Calu3 (cell line): ENCODE measurements at regions of chr12 and their contacts with region 1.

Region 1: GRCh38 chr12:40946612-40947194 is 241.4 kb upstream of the PDZRN4 start:
- DNase-seq: no peak
- H3K4me3 Mint-ChIP-seq: no peak overlapping the region
- H3K27ac Mint-ChIP-seq: no peak overlapping the region
- H3K4me1 Mint-ChIP-seq: no peaks in the 10 kb centered on the region
- H3K27me3 Mint-ChIP-seq: no peaks in the 10 kb centered on the region
- CTCF ChIP-seq: peak; percentile 17

Region 2: DNA sequence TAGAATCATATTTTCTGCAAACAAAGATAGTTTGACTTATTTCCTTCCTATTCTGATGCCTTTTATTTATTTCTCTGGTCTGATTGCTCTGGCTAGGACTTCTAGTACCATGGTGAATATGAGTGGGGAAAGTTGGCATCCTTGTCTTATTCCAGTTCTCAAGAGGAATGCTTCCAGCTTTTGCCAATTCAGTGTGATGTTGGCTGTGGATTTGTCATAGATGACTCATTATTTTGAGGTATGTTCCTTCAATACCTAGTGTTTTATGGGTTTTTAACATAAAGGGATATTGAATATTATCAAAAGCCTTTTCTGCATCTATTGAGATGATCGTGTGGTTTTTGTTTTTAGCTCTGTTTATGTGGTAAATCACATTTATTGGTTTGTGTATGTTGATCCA is 393.8 kb before region 1 on chr12:
- CTCF ChIA-PET with region 1: no interaction called
- intact Hi-C with region 1: no loop called
- DNase-seq: no peak
- H3K4me3 Mint-ChIP-seq: no peak overlapping the region
- H3K27ac Mint-ChIP-seq: no peak overlapping the region
- H3K4me1 Mint-ChIP-seq: no peaks in the 10 kb centered on the region
- H3K27me3 Mint-ChIP-seq: no peaks in the 10 kb centered on the region
- CTCF ChIP-seq: no peak

Region 3: DNA sequence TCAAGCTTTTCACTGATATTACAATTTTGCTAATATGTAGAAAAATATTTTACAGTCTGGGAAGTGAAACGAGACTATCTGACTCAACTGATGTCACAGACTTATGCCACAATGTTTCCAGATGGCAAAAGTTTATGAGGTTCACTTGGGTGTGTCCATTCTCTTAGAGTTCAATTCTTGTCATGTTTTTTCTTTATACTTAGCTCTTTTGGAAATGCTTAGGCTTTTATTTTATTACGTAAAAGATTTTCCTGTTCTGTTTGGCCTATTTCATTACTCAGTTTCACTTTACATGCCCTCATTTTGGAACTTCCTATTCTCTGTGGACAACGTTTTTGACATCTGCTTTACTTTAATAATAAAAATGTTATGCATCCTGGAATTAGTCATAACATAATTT is 239.3 kb after region 1 on chr12:
- CTCF ChIA-PET with region 1: no interaction called
- intact Hi-C with region 1: no loop called
- DNase-seq: no peak
- H3K4me3 Mint-ChIP-seq: no peak overlapping the region
- H3K27ac Mint-ChIP-seq: no peak overlapping the region
- H3K4me1 Mint-ChIP-seq: peaks cover 12% of the 10 kb centered on the region
- H3K27me3 Mint-ChIP-seq: peaks cover 15% of the 10 kb centered on the region
- CTCF ChIP-seq: no peak

Region 4: DNA sequence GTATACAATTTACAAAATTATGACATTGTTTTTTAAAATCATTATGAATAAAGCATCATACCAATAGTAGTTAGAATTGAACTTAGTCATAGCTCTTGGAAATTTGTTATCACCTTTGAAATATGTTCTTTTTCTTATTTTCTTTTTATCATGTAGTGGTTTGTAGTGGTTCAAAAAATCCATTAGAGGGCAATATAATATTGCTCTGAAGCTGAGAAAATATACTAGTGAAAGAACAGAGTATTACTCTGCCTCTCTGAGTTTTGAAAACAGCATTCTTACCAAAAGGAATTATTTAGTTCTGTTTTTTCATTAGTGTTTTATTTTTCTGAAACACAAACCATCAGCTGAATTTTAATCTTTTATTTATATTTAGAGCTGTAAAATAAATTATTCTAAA is 317.6 kb after region 1 on chr12:
- CTCF ChIA-PET with region 1: no interaction called
- intact Hi-C with region 1: loop called (anchors 5 kb)
- DNase-seq: no peak
- H3K4me3 Mint-ChIP-seq: no peak overlapping the region
- H3K27ac Mint-ChIP-seq: no peak overlapping the region
- H3K4me1 Mint-ChIP-seq: no peaks in the 10 kb centered on the region
- H3K27me3 Mint-ChIP-seq: no peaks in the 10 kb centered on the region
- CTCF ChIP-seq: no peak

Region 5: GRCh38 chr12:42023733-42024494 is 1077.2 kb after region 1 on chr12:
- CTCF ChIA-PET with region 1: interaction called, 3 read pairs
- intact Hi-C with region 1: loop called (anchors 2 kb)
- DNase-seq: peak; percentile 68
- H3K4me3 Mint-ChIP-seq: peak overlapping the region; percentile 64
- H3K27ac Mint-ChIP-seq: peak overlapping the region; percentile 31
- H3K4me1 Mint-ChIP-seq: no peaks in the 10 kb centered on the region
- H3K27me3 Mint-ChIP-seq: no peaks in the 10 kb centered on the region
- CTCF ChIP-seq: peak; percentile 71

Region 6: DNA sequence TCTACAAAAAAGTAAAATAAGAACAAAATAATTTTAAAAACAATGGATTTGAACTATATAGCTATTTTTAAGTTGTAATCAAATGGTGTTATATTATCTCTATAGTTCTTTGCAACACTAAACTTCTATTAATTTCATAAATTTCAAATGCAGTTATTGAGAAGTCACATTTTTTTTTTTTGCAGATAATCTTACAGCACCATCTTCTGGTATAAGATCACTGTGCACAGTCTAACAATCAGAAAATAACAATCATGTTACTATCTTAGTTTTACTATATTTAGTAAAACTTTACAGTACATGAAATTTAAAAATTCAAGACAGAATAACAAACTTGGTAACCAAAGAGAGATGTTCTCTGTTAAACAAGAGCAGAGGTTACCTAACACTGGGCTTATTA is 1157.4 kb after region 1 on chr12:
- CTCF ChIA-PET with region 1: no interaction called
- intact Hi-C with region 1: loop called (anchors 5 kb)
- DNase-seq: no peak
- H3K4me3 Mint-ChIP-seq: no peak overlapping the region
- H3K27ac Mint-ChIP-seq: no peak overlapping the region
- H3K4me1 Mint-ChIP-seq: no peaks in the 10 kb centered on the region
- H3K27me3 Mint-ChIP-seq: no peaks in the 10 kb centered on the region
- CTCF ChIP-seq: no peak